PC-3 (cell line): ENCODE measurements at regions of chr14 and their contacts with region 1.

Region 1: GRCh38 chr14:49908432-49908781 is 15.5 kb downstream of the ARF6 start:
- DNase-seq: peak; percentile 93
- ATAC-seq: peak; percentile 42
- H3K4me3 ChIP-seq: peak overlapping the region; percentile 33; the same call in 1 of the 2 replicates
- H3K27ac ChIP-seq: peak overlapping the region; percentile 85
- H3K4me1 ChIP-seq: peaks cover 59% of the 10 kb centered on the region
- H3K27me3 ChIP-seq: no peaks in the 10 kb centered on the region
- CTCF ChIP-seq: no peak

Region 2: DNA sequence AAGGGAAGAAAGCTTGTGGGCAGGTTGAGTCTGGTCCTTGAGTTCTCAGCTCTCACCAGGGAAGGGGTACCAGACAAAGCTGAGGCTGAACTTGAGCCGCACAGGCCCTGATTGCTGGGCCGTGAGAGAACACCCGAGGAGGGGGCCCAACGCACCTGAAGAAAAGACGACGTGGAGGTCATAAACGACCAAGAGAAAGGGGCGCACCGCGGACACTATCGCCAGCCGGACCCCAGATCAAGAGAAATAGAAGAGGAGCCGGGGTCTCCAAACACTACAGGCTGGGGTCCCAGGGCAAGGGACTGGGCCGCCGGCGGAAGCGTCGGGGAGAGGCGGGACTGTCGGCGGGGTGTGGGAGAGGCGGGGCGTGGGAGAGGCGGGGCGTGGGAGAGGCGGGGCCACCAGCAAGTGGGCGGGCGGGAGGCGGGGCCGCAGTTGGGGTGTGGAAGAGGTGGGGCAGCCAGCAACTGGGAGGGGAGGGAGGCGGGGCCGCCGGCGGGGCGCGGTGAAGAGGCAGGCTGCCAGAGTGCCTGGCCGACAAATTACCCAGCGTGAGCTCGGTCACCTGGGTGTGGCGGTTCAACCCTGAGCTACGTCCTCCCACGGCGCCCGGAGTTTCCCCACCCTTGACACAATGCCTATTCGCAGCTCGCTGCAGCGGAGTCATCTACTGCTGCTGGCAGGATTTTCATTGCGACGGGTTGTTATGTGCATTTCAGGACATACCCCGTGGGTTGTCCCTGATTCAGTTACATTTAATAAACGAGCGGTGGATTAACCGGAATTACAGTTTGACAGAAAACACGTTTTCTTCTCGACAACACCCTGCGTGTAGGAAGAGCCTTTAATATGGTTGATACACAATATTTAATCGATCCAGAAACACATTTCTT is 40.3 kb before region 1 on chr14:
- CTCF ChIA-PET with region 1: interaction called, 8 read pairs
- POLR2A ChIA-PET with region 1: interaction called, 7 read pairs
- intact Hi-C with region 1: loop called (anchors 1 kb)
- DNase-seq: peak; percentile 98
- ATAC-seq: peak; percentile 95
- H3K4me3 ChIP-seq: peak overlapping the region; percentile 71
- H3K27ac ChIP-seq: peak overlapping the region; percentile 67
- H3K4me1 ChIP-seq: peaks cover 33% of the 10 kb centered on the region
- H3K27me3 ChIP-seq: no peaks in the 10 kb centered on the region
- CTCF ChIP-seq: no peak

Region 3: GRCh38 chr14:49897968-49898367 is 10.4 kb before region 1 on chr14:
- CTCF ChIA-PET with region 1: interaction called, 5 read pairs
- POLR2A ChIA-PET with region 1: interaction called, 13 read pairs
- intact Hi-C with region 1: loop called (anchors 1 kb)
- DNase-seq: peak; percentile 73
- ATAC-seq: peak; percentile 28
- H3K4me3 ChIP-seq: peak overlapping the region; percentile 91
- H3K27ac ChIP-seq: peak overlapping the region; percentile 24
- H3K4me1 ChIP-seq: peaks cover 32% of the 10 kb centered on the region
- H3K27me3 ChIP-seq: no peaks in the 10 kb centered on the region
- CTCF ChIP-seq: no peak

Region 4: DNA sequence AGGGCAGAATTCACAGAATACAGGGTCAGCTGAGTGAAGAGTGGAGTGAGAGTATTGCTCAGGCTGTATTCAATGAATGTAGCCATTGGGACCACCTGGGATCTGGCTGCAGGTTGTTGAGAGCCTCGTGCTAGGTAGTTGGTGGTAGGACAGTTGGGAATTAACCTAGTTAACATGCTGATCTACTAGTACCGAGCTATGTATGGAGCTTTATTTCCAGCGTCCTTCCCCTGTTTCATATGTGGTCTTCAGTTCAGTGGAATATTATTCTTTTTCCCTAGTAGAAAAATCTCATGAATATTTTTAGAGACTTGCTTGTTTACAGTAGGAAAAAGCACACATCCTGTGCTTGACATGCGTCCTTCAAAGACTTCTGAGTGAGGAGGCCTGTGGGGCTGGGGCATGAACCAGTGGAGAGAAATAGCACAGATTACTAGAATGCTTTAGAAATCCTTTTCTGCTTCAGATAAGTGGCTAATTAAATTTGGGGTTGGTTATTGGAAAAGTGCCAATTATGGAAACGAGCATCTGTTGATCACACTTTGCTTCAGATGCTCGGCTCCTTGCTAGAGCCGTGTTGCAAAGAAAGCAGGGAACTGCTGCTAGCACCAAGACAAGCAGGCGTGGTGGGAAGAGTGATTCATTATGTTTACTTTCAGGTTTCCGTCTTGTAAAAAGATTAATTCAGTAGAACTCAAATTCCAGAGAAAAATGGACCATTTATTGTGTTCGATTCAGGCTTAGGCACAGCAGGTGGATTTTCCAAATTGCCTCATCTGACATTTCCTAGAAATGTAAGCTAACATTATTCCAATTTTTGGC is 38.1 kb after region 1 on chr14:
- CTCF ChIA-PET with region 1: no interaction called
- POLR2A ChIA-PET with region 1: interaction called, 3 read pairs
- intact Hi-C with region 1: loop called (anchors 1 kb)
- DNase-seq: peak; percentile 93
- ATAC-seq: peak; percentile 82
- H3K4me3 ChIP-seq: peak overlapping the region; percentile 23; the same call in 1 of the 2 replicates
- H3K27ac ChIP-seq: peak overlapping the region; percentile 65
- H3K4me1 ChIP-seq: peaks cover 50% of the 10 kb centered on the region
- H3K27me3 ChIP-seq: no peaks in the 10 kb centered on the region
- CTCF ChIP-seq: no peak

Region 5: GRCh38 chr14:49971156-49972130 is 63.0 kb after region 1 on chr14:
- CTCF ChIA-PET with region 1: no interaction called
- POLR2A ChIA-PET with region 1: interaction called, 4 read pairs
- intact Hi-C with region 1: loop called (anchors 1 kb)
- DNase-seq: peak; percentile 43
- ATAC-seq: peak; percentile 0
- H3K4me3 ChIP-seq: peak overlapping the region; percentile 38
- H3K27ac ChIP-seq: peak overlapping the region; percentile 95
- H3K4me1 ChIP-seq: peaks cover 79% of the 10 kb centered on the region
- H3K27me3 ChIP-seq: no peaks in the 10 kb centered on the region
- CTCF ChIP-seq: no peak